ENCODE measurements at regions of chr18 and their contacts with region 1.

Region 1: GRCh38 chr18:32552421-32553030 is 81.8 kb upstream of the GAREM1 start:
- DNase-seq: peak in 5 of 6 donors; percentile 66 to 79 (median 71)
- ATAC-seq: peak; percentile 87 to 97 (median 94)
- H3K4me3 ChIP-seq: no peak overlapping the region
- H3K27ac ChIP-seq: no peak overlapping the region
- H3K4me1 ChIP-seq: no peaks in the 10 kb centered on the region
- H3K27me3 ChIP-seq: no peaks in the 10 kb centered on the region
- CTCF ChIP-seq: peak; percentile 64 to 80 (median 68)

Region 2: DNA sequence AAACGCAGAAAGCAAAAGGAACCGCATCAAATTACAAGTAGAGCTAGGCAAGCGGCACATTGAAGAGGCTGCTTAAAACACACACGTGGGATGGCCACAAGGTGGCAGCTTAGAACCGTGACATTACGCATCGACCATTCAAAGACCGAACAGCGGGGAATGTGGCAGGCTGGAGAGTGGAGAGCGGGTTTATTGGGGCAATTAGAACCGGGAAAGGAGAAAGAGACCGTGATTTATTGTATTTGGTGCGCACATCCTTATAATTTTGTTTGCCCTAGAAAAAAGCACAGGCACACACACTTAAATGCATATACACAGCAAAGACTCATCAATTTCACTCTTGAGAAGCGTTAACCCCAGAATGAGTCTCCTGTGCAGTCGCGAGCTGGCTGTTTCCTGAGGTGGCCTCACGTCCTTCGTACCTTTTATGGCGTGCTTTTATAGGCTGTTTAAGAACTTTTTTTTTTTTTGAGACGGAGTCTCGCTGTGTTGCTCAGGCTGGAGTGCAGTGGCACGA is 394.4 kb before region 1 on chr18:
- intact Hi-C with region 1: loop called (anchors 5 to 10 kb)
- DNase-seq: peak; percentile 62 to 85 (median 72)
- ATAC-seq: peak; percentile 98 to 100 (median 100)
- H3K4me3 ChIP-seq: peak overlapping the region in 1 of 4 donors; percentile 13
- H3K27ac ChIP-seq: no peak overlapping the region
- H3K4me1 ChIP-seq: peaks cover 0 to 4% (median 0%) of the 10 kb centered on the region in 3 donors
- H3K27me3 ChIP-seq: no peaks in the 10 kb centered on the region
- CTCF ChIP-seq: peak; percentile 59 to 78 (median 67)

Region 3: DNA sequence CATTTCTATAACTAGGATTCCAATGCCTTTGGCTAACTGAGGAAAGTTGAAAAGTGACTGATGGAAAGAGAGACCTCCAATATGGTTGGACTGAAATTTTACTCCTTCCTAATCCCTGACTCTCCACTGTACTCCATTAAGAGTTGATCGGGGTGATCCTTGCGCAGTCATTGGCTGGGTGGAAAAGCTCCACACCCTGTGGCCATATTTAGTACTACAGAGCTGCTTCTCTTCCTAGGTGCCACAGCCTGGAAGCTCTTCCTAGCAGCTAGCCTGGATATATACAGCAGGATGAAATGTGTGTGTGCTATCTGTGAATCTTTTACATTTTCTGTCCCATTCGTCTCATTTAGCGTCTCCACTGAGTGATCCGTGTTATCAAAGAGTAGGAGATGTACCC is 291.5 kb before region 1 on chr18:
- intact Hi-C with region 1: loop called in 1 of 3 experiments (anchors 10 kb)
- DNase-seq: no peak
- ATAC-seq: peak in 1 of 4 donors; percentile 39
- H3K4me3 ChIP-seq: no peak overlapping the region
- H3K27ac ChIP-seq: no peak overlapping the region
- H3K4me1 ChIP-seq: no peaks in the 10 kb centered on the region
- H3K27me3 ChIP-seq: no peaks in the 10 kb centered on the region
- CTCF ChIP-seq: no peak

Region 4: GRCh38 chr18:32271672-32272208 is 280.8 kb before region 1 on chr18:
- intact Hi-C with region 1: loop called in 2 of 3 experiments (anchors 5 to 10 kb)
- DNase-seq: peak in 3 of 6 donors; percentile 25 to 46 (median 31)
- ATAC-seq: peak; percentile 60 to 97 (median 92)
- H3K4me3 ChIP-seq: no peak overlapping the region
- H3K27ac ChIP-seq: no peak overlapping the region
- H3K4me1 ChIP-seq: no peaks in the 10 kb centered on the region
- H3K27me3 ChIP-seq: no peaks in the 10 kb centered on the region
- CTCF ChIP-seq: peak in 3 of 4 donors; percentile 17 to 50 (median 35)

Measured in pancreas (tissue), 10 donors.